CD4-positive, alpha-beta T cell (primary cell): ENCODE measurements at regions of chrX and their contacts with region 1.

Region 1: DNA sequence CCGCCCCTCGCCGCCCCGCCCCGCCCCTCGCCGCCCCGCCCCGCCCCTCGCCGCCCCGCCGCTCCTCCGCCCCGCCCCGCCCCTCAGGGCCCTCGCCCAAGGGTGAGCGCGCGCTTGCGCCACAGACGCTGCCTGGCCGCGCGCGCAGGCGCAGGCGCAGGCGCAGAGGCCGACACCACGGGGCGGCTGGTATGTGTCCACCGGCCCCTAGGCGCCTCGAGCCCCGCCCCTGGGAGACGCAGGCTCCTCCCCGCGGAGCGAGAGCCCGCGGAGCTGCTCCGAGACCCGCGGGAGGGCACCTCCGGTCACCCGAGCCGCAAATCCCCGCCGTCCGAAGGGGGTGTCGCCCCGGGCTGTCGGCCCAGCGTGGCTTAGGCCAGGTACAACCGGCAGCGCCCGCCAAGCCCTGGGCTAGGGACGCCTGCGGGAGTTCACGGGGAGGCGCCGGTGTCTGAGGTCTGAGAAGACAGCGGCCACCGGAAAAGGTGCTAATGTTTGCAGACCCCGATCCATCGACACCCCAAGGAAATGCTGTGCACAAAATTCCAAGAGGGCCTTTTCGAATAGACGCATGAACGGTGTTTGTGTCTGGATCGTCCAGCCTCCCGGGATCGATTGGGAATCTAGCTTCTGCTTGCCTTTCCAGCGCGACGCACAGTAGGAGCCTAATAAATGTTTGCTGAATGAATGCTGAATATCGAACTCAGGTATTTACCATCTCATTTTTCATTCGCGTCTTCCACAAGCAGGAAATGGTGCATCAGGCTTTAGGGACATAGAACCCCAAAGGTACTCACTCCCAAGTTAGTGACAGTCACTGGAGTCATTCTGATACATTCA is 473 bp upstream of the CCNQ start:
- DNase-seq: peak; percentile 66 to 94 (median 84)
- ATAC-seq: peak; percentile 81
- H3K4me3 ChIP-seq: peak overlapping the region; percentile 79
- H3K4me3 Mint-ChIP-seq: peak overlapping the region; percentile 90
- H3K27ac ChIP-seq: peak overlapping the region in 1 of 2 donors; percentile 34
- H3K27ac Mint-ChIP-seq: peak overlapping the region; percentile 50
- H3K4me1 ChIP-seq: peaks cover 51% of the 10 kb centered on the region
- H3K4me1 Mint-ChIP-seq: peaks cover 45% of the 10 kb centered on the region
- H3K27me3 ChIP-seq: no peaks in the 10 kb centered on the region
- H3K27me3 Mint-ChIP-seq: no peaks in the 10 kb centered on the region
- CTCF ChIP-seq: no peak

Region 2: DNA sequence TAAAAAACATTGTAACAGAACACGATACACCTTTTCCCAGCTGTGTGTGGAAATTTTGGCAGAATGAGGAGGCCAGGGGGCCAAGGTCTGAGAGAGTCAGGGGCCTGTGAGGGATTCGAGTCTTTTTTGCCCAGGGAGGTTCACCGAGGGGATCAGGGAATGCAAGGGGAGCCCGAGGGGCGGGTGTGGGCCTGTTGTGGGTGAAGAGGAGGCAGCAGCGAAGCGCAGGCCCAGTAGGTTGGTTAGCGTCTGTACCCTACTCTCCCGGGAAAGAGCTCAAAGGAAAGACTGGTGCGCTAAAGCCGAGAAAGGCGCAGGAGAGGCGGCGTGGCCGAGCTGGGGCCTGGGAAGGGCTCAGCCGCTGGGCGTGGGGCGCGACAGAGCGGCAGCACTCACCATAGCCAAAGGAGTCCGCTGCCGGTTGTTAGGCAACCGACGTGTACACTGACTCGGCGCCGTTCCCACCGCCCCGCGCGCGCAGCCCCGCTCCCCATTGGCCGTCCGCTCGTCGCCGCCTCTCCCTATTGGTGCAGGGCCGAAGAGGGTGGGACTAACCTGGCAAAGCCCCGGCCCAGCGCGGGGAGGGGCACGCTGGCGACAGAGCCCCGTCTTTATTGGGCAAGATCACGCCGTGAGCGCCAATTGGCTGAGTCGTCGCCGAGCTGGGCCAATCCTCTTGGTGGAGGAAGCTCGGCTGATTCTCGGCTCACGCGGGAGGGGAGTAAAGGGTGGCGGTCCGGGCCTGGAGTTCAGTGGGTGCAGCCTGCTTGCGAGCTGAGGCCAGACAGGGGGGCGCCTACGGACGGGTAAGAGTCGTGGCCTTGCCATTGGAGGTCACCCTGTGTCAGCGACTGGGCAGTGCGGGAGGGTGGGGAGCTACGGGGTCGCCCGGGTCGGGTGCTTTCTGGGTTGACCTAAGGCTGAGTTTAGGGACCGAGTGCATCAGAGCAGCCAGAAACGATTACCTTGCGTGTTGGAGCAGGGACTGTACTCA is 768.8 kb before region 1 on chrX and contains the starts of genes CETN2 and NSDHL:
- CTCF ChIA-PET with region 1: no interaction called
- POLR2A ChIA-PET with region 1: no interaction called
- intact Hi-C with region 1: loop called in 1 of 2 experiments (anchors 5 kb)
- DNase-seq: peak; percentile 87 to 96 (median 91)
- ATAC-seq: peak; percentile 97
- H3K4me3 ChIP-seq: peak within 1 kb of the TSS; percentile 78
- H3K4me3 Mint-ChIP-seq: peak within 1 kb of the TSS; percentile 94
- H3K27ac ChIP-seq: peak within 1 kb of the TSS; percentile 53 to 62
- H3K27ac Mint-ChIP-seq: peak within 1 kb of the TSS; percentile 89
- H3K4me1 ChIP-seq: peaks cover 22% of the 10 kb centered on the region
- H3K4me1 Mint-ChIP-seq: peaks cover 36% of the 10 kb centered on the region
- H3K27me3 ChIP-seq: no peaks in the 10 kb centered on the region
- H3K27me3 Mint-ChIP-seq: no peaks in the 10 kb centered on the region
- CTCF ChIP-seq: no peak
- total RNA-seq, gene CETN2: 4.0 to 5.1 TPM
- total RNA-seq, gene NSDHL: 2.7 to 2.9 TPM

Region 3: DNA sequence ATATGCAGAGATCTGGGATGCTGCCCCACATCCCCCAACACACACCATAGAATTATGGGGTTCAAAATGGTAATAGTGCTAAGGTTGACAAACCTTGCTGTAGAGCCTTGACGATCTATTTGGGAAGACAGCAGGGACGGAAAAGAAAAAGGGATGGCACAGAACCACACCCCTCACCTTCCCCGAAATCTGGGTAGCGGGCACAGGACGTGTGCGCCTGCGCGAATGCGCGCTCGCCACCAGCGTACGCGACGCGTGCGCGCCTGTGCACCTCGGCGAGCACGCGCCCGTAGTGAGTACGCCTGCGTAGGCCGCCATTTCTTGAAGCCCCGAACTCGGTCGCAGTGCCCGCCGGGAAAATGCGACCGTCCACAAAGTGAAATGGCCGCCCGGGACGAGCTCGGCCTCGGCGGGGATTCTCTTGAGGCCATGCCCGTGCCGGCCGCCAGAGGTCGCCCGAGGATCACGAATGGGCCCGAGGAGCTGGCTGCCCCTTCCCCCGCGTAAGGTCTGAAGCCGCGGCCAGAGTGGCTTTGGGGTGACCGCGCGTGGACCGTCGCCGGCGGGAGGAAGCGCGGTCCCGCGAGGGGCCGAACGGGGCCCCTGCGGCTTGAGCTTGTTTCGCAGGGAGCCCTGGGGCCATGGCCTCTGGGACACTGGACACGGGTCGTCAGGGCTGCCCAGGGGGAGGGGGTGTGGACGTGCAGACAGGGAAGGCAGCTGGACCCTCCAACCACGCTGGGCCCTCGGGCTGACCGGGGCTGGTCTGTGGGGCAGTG is 657.9 kb before region 1 on chrX:
- CTCF ChIA-PET with region 1: interaction called, 4 read pairs
- POLR2A ChIA-PET with region 1: interaction called, 3 read pairs
- intact Hi-C with region 1: loop called in 1 of 2 experiments (anchors 5 kb)
- DNase-seq: peak; percentile 80 to 96 (median 88)
- ATAC-seq: peak; percentile 97
- H3K4me3 ChIP-seq: peak overlapping the region; percentile 57
- H3K4me3 Mint-ChIP-seq: peak overlapping the region; percentile 86
- H3K27ac ChIP-seq: peak overlapping the region; percentile 56 to 62
- H3K27ac Mint-ChIP-seq: peak overlapping the region; percentile 89
- H3K4me1 ChIP-seq: peaks cover 14% of the 10 kb centered on the region
- H3K4me1 Mint-ChIP-seq: peaks cover 9% of the 10 kb centered on the region
- H3K27me3 ChIP-seq: no peaks in the 10 kb centered on the region
- H3K27me3 Mint-ChIP-seq: no peaks in the 10 kb centered on the region
- CTCF ChIP-seq: peak; percentile 66

Region 4: DNA sequence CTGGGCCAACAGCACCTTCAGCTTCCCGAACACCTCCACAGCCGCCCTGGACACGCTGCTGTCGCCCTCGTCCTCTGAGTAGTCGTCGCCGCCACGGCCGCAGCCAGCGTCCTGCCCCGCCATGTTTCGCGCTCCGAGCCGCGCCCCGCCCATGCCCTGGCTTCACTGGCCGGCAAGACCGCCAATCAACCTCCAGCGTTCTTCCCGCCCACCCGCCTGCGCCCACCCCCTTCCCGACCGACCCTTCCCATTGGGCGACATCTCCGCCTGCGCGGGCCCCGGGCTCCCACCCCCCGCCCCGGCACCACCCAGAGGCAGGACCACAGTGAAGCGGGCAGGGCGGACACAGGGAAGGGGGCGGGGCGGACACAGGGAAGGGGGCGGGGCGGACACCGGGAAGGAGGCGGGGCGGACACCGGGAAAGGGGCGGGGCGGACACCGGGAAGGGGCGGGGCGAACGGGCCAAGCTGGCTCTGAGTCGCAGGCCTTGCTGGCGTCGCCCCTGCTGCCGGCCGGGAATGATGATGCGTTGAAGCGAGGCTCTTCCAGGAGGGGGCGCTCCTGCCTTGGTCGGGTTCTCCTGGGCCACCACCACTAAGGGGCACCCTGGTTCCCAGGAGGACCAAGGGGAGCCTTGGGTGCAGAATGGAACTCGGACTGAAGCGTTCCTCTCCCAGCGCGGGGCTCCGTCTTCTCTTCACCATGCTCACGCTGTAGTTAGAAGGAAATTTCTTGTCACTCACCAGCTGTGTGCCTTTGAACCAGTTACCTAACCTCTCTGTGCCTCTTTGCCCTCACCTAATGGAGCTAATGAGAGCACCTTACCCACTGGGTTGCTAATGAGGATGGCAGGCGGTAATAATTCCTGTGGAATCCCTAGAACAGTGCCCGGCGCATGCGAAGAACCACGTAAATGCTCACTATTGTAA is 128.7 kb before region 1 on chrX and contains the start of gene HAUS7:
- CTCF ChIA-PET with region 1: no interaction called
- POLR2A ChIA-PET with region 1: no interaction called
- intact Hi-C with region 1: loop called in 1 of 2 experiments (anchors 5 kb)
- DNase-seq: peak; percentile 81 to 95 (median 86)
- ATAC-seq: peak; percentile 83
- H3K4me3 ChIP-seq: peak within 1 kb of the TSS; percentile 75
- H3K4me3 Mint-ChIP-seq: peak within 1 kb of the TSS; percentile 87
- H3K27ac ChIP-seq: peak within 1 kb of the TSS; percentile 29 to 46
- H3K27ac Mint-ChIP-seq: peak within 1 kb of the TSS; percentile 84
- H3K4me1 ChIP-seq: peaks cover 40% of the 10 kb centered on the region
- H3K4me1 Mint-ChIP-seq: peaks cover 6% of the 10 kb centered on the region
- H3K27me3 ChIP-seq: no peaks in the 10 kb centered on the region
- H3K27me3 Mint-ChIP-seq: no peaks in the 10 kb centered on the region
- CTCF ChIP-seq: peak; percentile 56
- total RNA-seq, gene HAUS7: 24.4 to 25.6 TPM

Region 5: GRCh38 chrX:153582896-153583295 is 16.5 kb before region 1 on chrX:
- CTCF ChIA-PET with region 1: no interaction called
- POLR2A ChIA-PET with region 1: interaction called, 10 read pairs
- intact Hi-C with region 1: loop called in 1 of 2 experiments (anchors 1 kb)
- DNase-seq: peak; percentile 33 to 88 (median 60)
- ATAC-seq: peak; percentile 100
- H3K4me3 ChIP-seq: peak overlapping the region; percentile 16
- H3K4me3 Mint-ChIP-seq: peak overlapping the region; percentile 62
- H3K27ac ChIP-seq: no peak overlapping the region
- H3K27ac Mint-ChIP-seq: peak overlapping the region; percentile 70
- H3K4me1 ChIP-seq: peaks cover 21% of the 10 kb centered on the region
- H3K4me1 Mint-ChIP-seq: peaks cover 26% of the 10 kb centered on the region
- H3K27me3 ChIP-seq: no peaks in the 10 kb centered on the region
- H3K27me3 Mint-ChIP-seq: no peaks in the 10 kb centered on the region
- CTCF ChIP-seq: no peak

Region 6: DNA sequence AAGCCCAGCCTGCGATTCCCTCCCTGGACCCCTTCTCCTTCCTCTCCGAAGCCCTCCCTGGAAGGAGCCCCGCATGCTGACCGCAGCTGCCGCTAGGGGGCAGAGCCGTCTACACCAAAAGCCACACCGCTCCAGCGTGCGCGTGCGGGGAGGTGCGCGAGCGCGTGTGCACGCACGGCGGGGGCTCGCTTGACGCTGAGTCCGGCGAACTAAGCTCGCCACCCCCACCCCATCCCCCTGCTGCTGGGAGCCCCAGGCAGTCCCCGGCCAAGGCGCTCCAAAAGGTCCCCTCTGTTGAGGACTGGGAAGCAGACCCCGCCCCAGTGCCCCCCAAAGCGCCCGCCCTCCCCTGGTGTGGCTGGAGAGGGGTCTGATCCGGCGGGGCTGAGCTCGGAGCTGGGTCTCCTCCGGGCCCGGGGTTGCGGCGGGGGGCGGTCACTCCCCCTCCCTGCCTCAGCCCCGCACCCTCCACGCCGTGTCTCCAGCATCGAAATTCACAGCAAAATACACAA is 10.6 kb after region 1 on chrX:
- CTCF ChIA-PET with region 1: interaction called, 11 read pairs
- POLR2A ChIA-PET with region 1: interaction called, 4 read pairs
- intact Hi-C with region 1: no loop called
- DNase-seq: peak; percentile 69 to 88 (median 72)
- ATAC-seq: peak; percentile 85
- H3K4me3 ChIP-seq: peak overlapping the region; percentile 61
- H3K4me3 Mint-ChIP-seq: peak overlapping the region; percentile 91
- H3K27ac ChIP-seq: no peak overlapping the region
- H3K27ac Mint-ChIP-seq: peak overlapping the region; percentile 71
- H3K4me1 ChIP-seq: peaks cover 18% of the 10 kb centered on the region
- H3K4me1 Mint-ChIP-seq: peaks cover 7% of the 10 kb centered on the region
- H3K27me3 ChIP-seq: no peaks in the 10 kb centered on the region
- H3K27me3 Mint-ChIP-seq: no peaks in the 10 kb centered on the region
- CTCF ChIP-seq: peak; percentile 64

Region 7: GRCh38 chrX:153672531-153673427 is 73.4 kb after region 1 on chrX:
- CTCF ChIA-PET with region 1: no interaction called
- POLR2A ChIA-PET with region 1: no interaction called
- intact Hi-C with region 1: no loop called
- DNase-seq: peak in 1 of 14 experiments; percentile 13
- ATAC-seq: no peak
- H3K4me3 ChIP-seq: no peak overlapping the region
- H3K4me3 Mint-ChIP-seq: no peak overlapping the region
- H3K27ac ChIP-seq: no peak overlapping the region
- H3K27ac Mint-ChIP-seq: no peak overlapping the region
- H3K4me1 ChIP-seq: peaks cover 13% of the 10 kb centered on the region
- H3K4me1 Mint-ChIP-seq: peaks cover 4% of the 10 kb centered on the region
- H3K27me3 ChIP-seq: peaks cover 0 to 10% of the 10 kb centered on the region in 2 experiments
- H3K27me3 Mint-ChIP-seq: peaks cover 25% of the 10 kb centered on the region
- CTCF ChIP-seq: no peak

Region 8: GRCh38 chrX:153684467-153685155 is 85.2 kb after region 1 on chrX:
- CTCF ChIA-PET with region 1: no interaction called
- POLR2A ChIA-PET with region 1: no interaction called
- intact Hi-C with region 1: no loop called
- DNase-seq: no peak
- ATAC-seq: no peak
- H3K4me3 ChIP-seq: no peak overlapping the region
- H3K4me3 Mint-ChIP-seq: no peak overlapping the region
- H3K27ac ChIP-seq: no peak overlapping the region
- H3K27ac Mint-ChIP-seq: no peak overlapping the region
- H3K4me1 ChIP-seq: peaks cover 5% of the 10 kb centered on the region
- H3K4me1 Mint-ChIP-seq: no peaks in the 10 kb centered on the region
- H3K27me3 ChIP-seq: peaks cover 0 to under 1% of the 10 kb centered on the region in 2 experiments
- H3K27me3 Mint-ChIP-seq: peaks cover 10% of the 10 kb centered on the region
- CTCF ChIP-seq: no peak

Region 9: DNA sequence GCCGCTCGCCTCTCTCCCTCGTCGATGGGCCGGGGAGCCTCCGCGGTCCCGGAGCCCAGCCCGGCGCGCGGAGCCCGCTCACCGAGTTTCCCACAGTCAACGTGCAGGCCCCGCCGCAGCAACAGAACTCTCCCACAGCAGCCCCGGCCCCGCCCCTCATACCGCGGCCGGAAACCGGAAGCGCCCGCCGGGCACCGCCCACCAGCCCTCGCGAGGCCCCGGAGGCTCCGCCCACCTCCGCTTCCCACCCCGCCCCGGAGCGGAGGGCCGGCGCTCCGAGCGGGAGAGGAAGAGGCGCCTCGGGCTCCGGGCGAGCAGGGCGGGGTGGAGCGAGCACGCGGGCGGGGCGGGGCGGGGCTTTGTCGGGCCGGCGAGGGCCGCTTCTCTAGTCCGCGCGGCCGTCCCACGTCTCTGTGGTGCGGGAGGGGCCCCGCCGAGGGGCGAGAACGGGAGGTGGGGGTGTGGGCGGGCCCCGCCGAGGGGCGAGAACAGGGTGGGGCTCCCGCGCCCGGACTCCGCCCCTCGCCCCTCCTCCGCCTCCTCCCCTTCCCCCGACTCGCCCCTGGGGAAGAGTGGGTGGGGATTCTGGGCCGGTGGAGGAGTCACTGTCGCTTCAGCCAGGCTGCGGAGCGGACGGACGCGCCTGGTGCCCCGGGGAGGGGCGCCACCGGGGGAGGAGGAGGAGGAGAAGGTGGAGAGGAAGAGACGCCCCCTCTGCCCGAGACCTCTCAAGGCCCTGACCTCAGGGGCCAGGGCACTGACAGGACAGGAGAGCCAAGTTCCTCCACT is 125.0 kb after region 1 on chrX and contains the starts of genes ABCD1 and BCAP31:
- CTCF ChIA-PET with region 1: no interaction called
- POLR2A ChIA-PET with region 1: no interaction called
- intact Hi-C with region 1: loop called in 1 of 2 experiments (anchors 5 kb)
- DNase-seq: peak; percentile 76 to 94 (median 86)
- ATAC-seq: peak; percentile 74
- H3K4me3 ChIP-seq: peak within 1 kb of the TSS; percentile 68
- H3K4me3 Mint-ChIP-seq: peak within 1 kb of the TSS; percentile 91
- H3K27ac ChIP-seq: peak within 1 kb of the TSS; percentile 68 to 72
- H3K27ac Mint-ChIP-seq: peak within 1 kb of the TSS; percentile 84
- H3K4me1 ChIP-seq: peaks cover 59% of the 10 kb centered on the region
- H3K4me1 Mint-ChIP-seq: peaks cover 26% of the 10 kb centered on the region
- H3K27me3 ChIP-seq: no peaks in the 10 kb centered on the region
- H3K27me3 Mint-ChIP-seq: no peaks in the 10 kb centered on the region
- CTCF ChIP-seq: no peak
- total RNA-seq, gene ABCD1: 8.6 to 9.2 TPM
- total RNA-seq, gene BCAP31: 42.1 to 43.1 TPM